AG04449 (cell line): ENCODE measurements at regions of chr15 and their contacts with region 1.

Region 1: DNA sequence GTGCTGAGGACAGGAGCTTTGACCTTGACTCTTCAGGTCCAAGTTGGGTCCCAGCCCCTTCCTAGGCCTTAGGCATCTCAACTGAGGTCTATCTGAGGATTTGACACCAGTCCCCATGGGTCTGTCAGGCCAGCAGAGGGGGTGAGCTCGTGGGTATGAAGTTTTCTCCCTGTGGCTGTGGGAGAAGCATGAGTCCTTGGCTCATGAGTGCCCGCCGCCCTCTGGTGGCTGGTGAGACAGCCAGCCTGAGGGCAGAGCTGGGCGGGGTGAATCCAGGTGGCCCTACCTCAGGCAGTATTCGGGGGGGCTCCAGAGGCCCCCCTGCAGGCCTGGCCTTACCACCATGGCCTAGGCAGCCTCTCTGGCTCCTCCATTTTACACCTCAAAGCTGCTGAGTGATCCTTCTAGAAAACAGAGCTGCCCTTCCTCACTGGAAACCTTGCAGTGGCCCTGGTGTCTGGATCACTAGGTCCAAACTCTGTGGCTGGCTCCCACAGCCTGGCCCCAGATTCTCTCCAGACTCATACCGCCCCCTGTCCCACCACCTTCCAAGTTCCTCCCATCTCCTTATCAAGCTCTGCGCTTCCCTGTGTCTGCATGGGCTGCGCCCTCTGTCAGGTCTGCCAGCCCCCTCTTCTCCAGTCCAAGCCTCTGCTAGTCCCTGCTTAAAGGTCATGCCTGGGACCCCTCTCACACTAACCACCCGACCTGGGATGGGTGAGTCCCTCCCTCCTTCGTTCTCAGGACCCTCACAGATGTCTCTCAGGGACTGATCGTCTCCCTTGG is 16.1 kb downstream of the SH2D7 start:
- DNase-seq: no peak
- H3K4me3 ChIP-seq: no peak overlapping the region
- CTCF ChIP-seq: peak; percentile 98

Region 2: GRCh38 chr15:77907824-77908751 is 200.4 kb before region 1 on chr15:
- CTCF ChIA-PET with region 1: interaction called, 15 read pairs
- POLR2A ChIA-PET with region 1: no interaction called
- DNase-seq: no peak
- H3K4me3 ChIP-seq: no peak overlapping the region
- CTCF ChIP-seq: peak; percentile 60

Region 3: GRCh38 chr15:78000091-78000926 is 108.2 kb before region 1 on chr15:
- CTCF ChIA-PET with region 1: interaction called, 61 read pairs
- POLR2A ChIA-PET with region 1: no interaction called
- DNase-seq: no peak
- H3K4me3 ChIP-seq: no peak overlapping the region
- CTCF ChIP-seq: peak; percentile 65

Region 4: DNA sequence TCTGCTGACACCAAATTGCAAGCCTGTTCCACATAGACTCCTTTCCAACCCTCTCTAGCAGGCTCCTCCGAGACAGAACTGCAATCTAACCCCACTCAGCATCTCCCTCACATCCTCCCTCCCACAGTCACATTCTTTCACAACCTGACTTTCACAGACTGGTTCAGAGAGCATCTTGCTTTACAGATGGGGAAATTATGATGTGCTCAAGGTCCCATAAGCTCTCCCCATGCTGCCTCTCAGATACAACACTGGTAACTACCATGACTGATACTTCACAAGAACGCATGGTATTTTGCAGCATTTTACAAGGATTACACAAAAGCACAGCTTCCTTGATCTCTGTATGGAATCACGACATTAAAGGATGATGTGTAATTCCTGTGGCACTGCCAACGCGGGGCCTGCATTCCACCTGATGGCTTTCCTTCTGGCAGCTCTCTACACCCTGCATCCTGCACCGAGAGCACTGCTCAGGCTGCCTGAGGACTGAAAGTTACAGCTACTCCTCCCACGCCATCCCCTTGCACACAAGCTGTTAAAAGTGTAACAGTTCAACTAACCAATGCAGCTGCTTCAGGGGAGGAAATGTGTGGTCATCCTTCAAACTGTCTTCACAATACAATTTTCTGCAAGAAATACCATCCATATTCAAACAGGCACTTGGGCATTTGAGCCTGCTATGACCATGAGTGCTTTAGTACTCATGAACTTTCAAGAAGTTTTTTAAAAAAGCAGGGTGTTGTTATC is 58.6 kb before region 1 on chr15:
- CTCF ChIA-PET with region 1: interaction called, 53 read pairs
- POLR2A ChIA-PET with region 1: no interaction called
- DNase-seq: peak; percentile 96
- H3K4me3 ChIP-seq: no peak overlapping the region
- CTCF ChIP-seq: no peak

Region 5: DNA sequence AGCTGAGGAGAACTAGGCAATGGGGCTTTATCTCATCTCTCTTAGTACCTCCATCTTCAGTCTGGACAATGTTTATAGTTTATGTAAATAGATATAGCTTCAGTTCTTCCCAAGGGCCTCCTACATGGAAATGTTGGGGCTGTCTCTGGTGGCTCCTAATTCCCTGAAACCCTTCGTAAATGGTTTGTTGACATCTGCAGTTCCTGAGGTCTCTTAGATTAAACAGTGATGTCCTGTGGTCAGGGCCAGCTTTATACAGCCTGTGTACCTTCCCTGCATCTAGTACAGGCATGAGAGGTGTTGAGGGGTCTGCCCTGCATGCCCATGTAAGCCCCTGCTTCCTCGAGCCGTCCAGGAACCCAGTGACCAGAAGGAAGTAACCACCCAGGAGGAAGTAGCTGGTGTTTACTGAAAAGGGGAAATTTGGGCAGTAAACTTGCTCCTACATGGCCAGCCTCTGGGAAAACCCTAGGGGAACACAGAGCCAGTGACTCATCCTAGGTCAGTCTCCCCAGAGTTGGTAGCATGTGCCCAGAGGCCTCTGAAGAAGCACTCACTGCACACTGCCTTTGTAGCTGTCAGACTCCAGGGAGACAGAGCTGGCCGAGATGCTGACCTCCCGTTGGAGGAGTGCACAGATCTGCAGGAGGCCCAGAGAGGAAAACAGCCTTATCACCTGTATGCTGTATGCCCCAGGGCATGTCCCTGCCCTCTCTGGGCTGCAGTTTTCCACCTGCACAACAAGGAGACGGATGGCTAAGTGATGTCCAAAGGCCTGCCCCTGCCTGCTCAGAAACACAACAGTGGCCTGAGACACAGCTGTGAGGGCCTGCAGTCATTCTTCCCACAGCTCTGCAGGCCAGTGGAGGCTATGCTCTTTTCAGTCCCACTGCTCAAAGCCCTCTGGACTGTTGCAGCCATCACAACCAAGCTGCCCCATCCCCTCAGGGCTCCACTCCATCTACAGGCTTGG is 26.1 kb before region 1 on chr15:
- CTCF ChIA-PET with region 1: interaction called, 110 read pairs
- POLR2A ChIA-PET with region 1: no interaction called
- DNase-seq: no peak
- H3K4me3 ChIP-seq: no peak overlapping the region
- CTCF ChIP-seq: no peak

Region 6: GRCh38 chr15:78131295-78132061 is 23.0 kb after region 1 on chr15 and contains the start of gene CIB2:
- CTCF ChIA-PET with region 1: interaction called, 117 read pairs
- POLR2A ChIA-PET with region 1: no interaction called
- DNase-seq: no peak
- H3K4me3 ChIP-seq: peak within 1 kb of the TSS; percentile 76
- CTCF ChIP-seq: peak; percentile 76